ENCODE measurements at regions of chr10 and their contacts with region 1.

Region 1: GRCh38 chr10:79374312-79375191 is 27.3 kb downstream of the PPIF start:
- DNase-seq: peak; percentile 87

Region 2: GRCh38 chr10:79359816-79360498 is 14.6 kb before region 1 on chr10:
- CTCF ChIA-PET with region 1: no interaction called
- POLR2A ChIA-PET with region 1: no interaction called
- DNase-seq: no peak

Region 3: GRCh38 chr10:79385804-79386531 is 11.4 kb after region 1 on chr10:
- CTCF ChIA-PET with region 1: no interaction called
- POLR2A ChIA-PET with region 1: no interaction called
- DNase-seq: no peak

Region 4: GRCh38 chr10:79418886-79419595 is 44.5 kb after region 1 on chr10:
- CTCF ChIA-PET with region 1: no interaction called
- POLR2A ChIA-PET with region 1: no interaction called
- DNase-seq: no peak

Region 5: GRCh38 chr10:79468024-79468560 is 93.5 kb after region 1 on chr10:
- CTCF ChIA-PET with region 1: interaction called, 11 read pairs
- POLR2A ChIA-PET with region 1: no interaction called
- DNase-seq: no peak

Region 6: DNA sequence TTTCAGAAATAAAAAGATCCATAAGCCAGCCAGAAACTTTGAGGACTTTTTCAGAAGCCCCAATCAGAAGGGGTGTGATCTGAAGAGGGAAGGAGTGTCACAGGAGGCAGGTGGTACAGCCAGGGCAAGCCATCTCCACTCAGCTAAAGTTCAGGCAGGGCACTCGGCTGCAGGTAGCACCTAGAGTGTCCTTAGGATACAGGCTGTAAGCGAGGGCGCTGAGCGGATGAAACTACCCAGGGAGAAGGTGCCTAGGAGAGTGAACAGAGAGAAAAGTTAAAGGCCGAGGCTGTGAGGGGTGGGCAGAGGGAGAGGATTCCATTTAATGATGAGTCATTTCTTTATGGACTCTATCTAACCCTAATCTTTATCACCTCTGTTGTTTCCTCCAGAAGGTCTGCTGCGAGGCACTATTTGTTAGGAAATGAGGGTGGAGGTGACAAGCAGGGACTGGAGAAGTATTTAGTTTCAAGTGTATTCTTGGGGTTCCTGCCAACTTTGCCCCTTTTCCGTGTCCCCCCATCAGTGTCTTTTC is 100.6 kb after region 1 on chr10:
- CTCF ChIA-PET with region 1: interaction called, 14 read pairs
- POLR2A ChIA-PET with region 1: no interaction called
- DNase-seq: no peak

Region 7: GRCh38 chr10:79487296-79488194 is 113.0 kb after region 1 on chr10:
- CTCF ChIA-PET with region 1: interaction called, 28 read pairs
- POLR2A ChIA-PET with region 1: no interaction called
- DNase-seq: peak; percentile 87

Region 8: DNA sequence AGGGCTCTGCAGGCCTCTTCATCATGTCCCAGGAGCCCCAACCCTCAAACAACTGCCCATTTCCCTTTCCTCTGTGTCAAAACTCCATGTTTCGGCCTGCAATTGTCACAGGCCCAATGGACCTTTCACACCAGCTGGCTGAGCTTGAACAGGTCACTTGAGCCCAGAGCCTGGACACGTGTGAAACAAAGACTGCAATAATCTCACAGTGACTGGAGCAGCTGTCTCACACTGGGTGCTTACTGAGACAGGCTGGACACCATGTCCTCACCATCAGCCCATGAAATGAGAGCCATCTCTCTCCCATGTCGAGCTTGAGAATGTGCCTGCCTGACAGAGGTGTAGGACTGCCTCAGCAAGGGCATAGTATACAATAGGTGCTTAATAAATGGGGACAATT is 118.3 kb after region 1 on chr10:
- CTCF ChIA-PET with region 1: interaction called, 28 read pairs
- POLR2A ChIA-PET with region 1: no interaction called
- DNase-seq: no peak

Region 9: GRCh38 chr10:79638318-79638717 is 263.8 kb after region 1 on chr10:
- CTCF ChIA-PET with region 1: no interaction called
- POLR2A ChIA-PET with region 1: no interaction called
- DNase-seq: no peak